ENCODE measurements at regions of chr2 and their contacts with region 1.

Region 1: GRCh38 chr2:86617153-86617552 is 6.5 kb downstream of the RNF103 start:
- DNase-seq: no peak
- ATAC-seq: no peak
- H3K4me3 ChIP-seq: no peak overlapping the region
- H3K27ac ChIP-seq: no peak overlapping the region
- H3K4me1 ChIP-seq: peaks cover 51% of the 10 kb centered on the region
- H3K27me3 ChIP-seq: no peaks in the 10 kb centered on the region; a peak in 1 of 5 replicates
- CTCF ChIP-seq: no peak
- EP300 ChIP-seq: no peak
- POLR2A ChIP-seq: no peak
- RAD21 ChIP-seq: no peak

Region 2: GRCh38 chr2:86584151-86584913 is 32.8 kb before region 1 on chr2:
- CTCF ChIA-PET with region 1: no interaction called
- POLR2A ChIA-PET with region 1: no interaction called
- in situ Hi-C with region 1: no loop called
- intact Hi-C with region 1: loop called (anchors 5 kb)
- DNase-seq: no peak
- ATAC-seq: no peak
- H3K4me3 ChIP-seq: no peak overlapping the region
- H3K27ac ChIP-seq: no peak overlapping the region
- H3K4me1 ChIP-seq: no peaks in the 10 kb centered on the region
- H3K27me3 ChIP-seq: no peaks in the 10 kb centered on the region
- CTCF ChIP-seq: no peak
- EP300 ChIP-seq: no peak
- POLR2A ChIP-seq: no peak
- RAD21 ChIP-seq: no peak

Region 3: DNA sequence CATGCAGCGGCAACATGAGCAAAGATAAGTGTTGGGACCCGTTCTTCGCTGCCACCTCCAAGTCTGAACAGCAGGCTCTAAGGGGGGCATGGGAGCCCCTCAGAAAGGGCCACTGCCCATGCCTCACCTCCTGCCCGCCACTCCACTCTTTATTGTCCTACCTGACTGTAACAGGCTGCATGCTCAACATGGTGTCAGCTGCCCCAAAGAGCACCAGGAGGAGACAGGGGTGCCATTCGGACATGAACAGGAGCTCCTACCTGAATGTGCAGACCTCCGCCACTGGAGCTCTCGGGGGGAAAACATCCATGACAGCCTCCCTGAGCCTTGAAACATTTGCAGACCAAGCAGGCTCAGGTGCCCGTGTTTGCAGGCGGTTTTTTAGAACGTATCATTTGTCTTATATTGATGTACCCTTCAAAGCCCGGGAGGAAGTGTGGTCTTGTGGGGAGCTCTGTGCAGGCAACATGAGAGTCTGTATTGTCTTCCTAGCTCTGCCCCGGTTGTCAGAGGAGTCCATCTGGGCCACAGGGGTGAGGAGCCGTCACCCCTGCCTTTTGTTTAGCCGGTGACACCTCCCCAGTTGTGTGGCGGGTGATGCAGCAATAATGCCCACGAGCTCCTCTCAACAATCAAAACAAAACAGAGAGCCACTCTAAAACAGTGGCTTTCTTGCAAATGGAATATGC is 208.7 kb after region 1 on chr2:
- CTCF ChIA-PET with region 1: no interaction called
- POLR2A ChIA-PET with region 1: no interaction called
- in situ Hi-C with region 1: no loop called
- intact Hi-C with region 1: no loop called
- DNase-seq: no peak
- ATAC-seq: peak; percentile 25; the same call in 2 of the 3 replicates
- H3K4me3 ChIP-seq: no peak overlapping the region
- H3K27ac ChIP-seq: no peak overlapping the region
- H3K4me1 ChIP-seq: peaks cover 15% of the 10 kb centered on the region
- H3K27me3 ChIP-seq: peaks cover 0 to 23% of the 10 kb centered on the region in 2 experiments; a peak in 3 of 5 replicates
- CTCF ChIP-seq: no peak
- EP300 ChIP-seq: no peak
- POLR2A ChIP-seq: no peak
- RAD21 ChIP-seq: no peak